Activated CD8-positive, alpha-beta T cell treated with anti-CD3 and anti-CD28 coated beads, Interleukin-2, amount 10 ng/mL, durations not matched to agents 7 days and 5 days (primary cell): ENCODE measurements at regions of chr1 and their contacts with region 1.

Region 1: GRCh38 chr1:160768295-160768657 is 27.7 kb upstream of the LY9 start:
- DNase-seq: peak; percentile 93
- ATAC-seq: peak; percentile 93
- H3K4me3 Mint-ChIP-seq: peak overlapping the region; percentile 82
- H3K27ac Mint-ChIP-seq: peak overlapping the region; percentile 95
- H3K4me1 Mint-ChIP-seq: peaks cover 46% of the 10 kb centered on the region
- H3K27me3 Mint-ChIP-seq: no peaks in the 10 kb centered on the region

Region 2: GRCh38 chr1:160618763-160619274 is 149.5 kb before region 1 on chr1:
- CTCF ChIA-PET with region 1: interaction called, 16 read pairs
- POLR2A ChIA-PET with region 1: interaction called, 3 read pairs
- DNase-seq: peak; percentile 61
- ATAC-seq: no peak
- H3K4me3 Mint-ChIP-seq: no peak overlapping the region
- H3K27ac Mint-ChIP-seq: peak overlapping the region; percentile 55
- H3K4me1 Mint-ChIP-seq: peaks cover 73% of the 10 kb centered on the region
- H3K27me3 Mint-ChIP-seq: no peaks in the 10 kb centered on the region

Region 3: GRCh38 chr1:160681067-160681890 is 87.0 kb before region 1 on chr1:
- CTCF ChIA-PET with region 1: interaction called, 91 read pairs
- POLR2A ChIA-PET with region 1: interaction called, 5 read pairs
- DNase-seq: peak; percentile 93
- ATAC-seq: peak; percentile 78
- H3K4me3 Mint-ChIP-seq: no peak overlapping the region
- H3K27ac Mint-ChIP-seq: peak overlapping the region; percentile 88
- H3K4me1 Mint-ChIP-seq: peaks cover 85% of the 10 kb centered on the region
- H3K27me3 Mint-ChIP-seq: no peaks in the 10 kb centered on the region

Region 4: GRCh38 chr1:160731990-160732389 is 36.3 kb before region 1 on chr1:
- CTCF ChIA-PET with region 1: interaction called, 439 read pairs
- POLR2A ChIA-PET with region 1: interaction called, 13 read pairs
- DNase-seq: no peak
- ATAC-seq: no peak
- H3K4me3 Mint-ChIP-seq: no peak overlapping the region
- H3K27ac Mint-ChIP-seq: no peak overlapping the region
- H3K4me1 Mint-ChIP-seq: peaks cover 39% of the 10 kb centered on the region
- H3K27me3 Mint-ChIP-seq: no peaks in the 10 kb centered on the region

Region 5: GRCh38 chr1:160748181-160748877 is 19.9 kb before region 1 on chr1:
- CTCF ChIA-PET with region 1: interaction called, 217 read pairs
- POLR2A ChIA-PET with region 1: interaction called, 16 read pairs
- DNase-seq: no peak
- ATAC-seq: no peak
- H3K4me3 Mint-ChIP-seq: no peak overlapping the region
- H3K27ac Mint-ChIP-seq: peak overlapping the region; percentile 40
- H3K4me1 Mint-ChIP-seq: peaks cover 96% of the 10 kb centered on the region
- H3K27me3 Mint-ChIP-seq: no peaks in the 10 kb centered on the region

Region 6: GRCh38 chr1:160795951-160796383 is 27.7 kb after region 1 on chr1 and contains the start of gene LY9:
- CTCF ChIA-PET with region 1: interaction called, 48 read pairs
- POLR2A ChIA-PET with region 1: interaction called, 9 read pairs
- DNase-seq: peak; percentile 89
- ATAC-seq: peak; percentile 85
- H3K4me3 Mint-ChIP-seq: peak within 1 kb of the TSS; percentile 88
- H3K27ac Mint-ChIP-seq: peak within 1 kb of the TSS; percentile 95
- H3K4me1 Mint-ChIP-seq: peaks cover 62% of the 10 kb centered on the region
- H3K27me3 Mint-ChIP-seq: no peaks in the 10 kb centered on the region
- total RNA-seq, gene LY9: 24.7 to 24.9 TPM

Region 7: DNA sequence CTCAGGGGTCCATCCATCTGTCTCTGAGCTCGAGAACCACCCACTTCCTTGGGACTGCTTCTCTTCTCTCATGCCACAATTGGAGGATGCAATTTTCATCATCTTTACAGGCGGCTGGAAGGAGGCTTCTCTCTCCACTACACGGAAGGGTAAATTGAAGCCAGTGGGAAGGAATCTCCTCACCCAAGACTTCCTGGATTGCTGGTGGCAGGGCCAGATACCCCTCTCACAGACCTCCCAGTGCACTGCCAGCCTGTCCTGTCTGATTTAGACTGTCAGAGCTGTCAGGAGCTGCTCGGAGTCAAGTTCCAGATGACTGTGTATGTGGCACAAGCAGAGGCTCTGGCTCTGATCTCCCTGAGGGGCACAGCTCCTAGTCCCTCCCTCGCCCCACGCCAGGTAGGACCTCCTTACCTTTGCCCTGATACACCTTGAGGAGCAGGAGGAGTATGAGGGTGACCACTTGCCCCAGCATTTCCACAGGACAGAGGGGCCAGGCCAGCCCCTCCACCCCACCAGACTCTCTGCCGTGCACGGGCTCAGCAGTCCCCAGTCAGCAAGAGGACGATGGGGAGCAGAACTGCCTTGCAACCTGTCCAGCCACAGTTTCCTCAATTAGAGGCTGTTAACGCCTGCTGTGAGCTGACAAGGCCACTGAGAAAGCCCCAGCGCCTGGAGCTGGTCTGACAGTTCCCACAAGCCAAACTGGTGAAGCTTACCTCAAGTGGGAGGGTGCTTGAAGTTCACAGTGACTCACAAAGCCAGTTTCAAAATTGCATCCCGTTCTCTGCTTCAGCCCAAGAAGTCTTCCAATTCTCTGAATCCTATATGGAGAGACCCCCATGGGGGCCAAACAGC is 94.2 kb after region 1 on chr1 and contains the start of gene CD244:
- CTCF ChIA-PET with region 1: no interaction called
- POLR2A ChIA-PET with region 1: no interaction called
- DNase-seq: peak; percentile 82
- ATAC-seq: peak; percentile 90
- H3K4me3 Mint-ChIP-seq: peak within 1 kb of the TSS; percentile 78
- H3K27ac Mint-ChIP-seq: peak within 1 kb of the TSS; percentile 90
- H3K4me1 Mint-ChIP-seq: peaks cover 56% of the 10 kb centered on the region
- H3K27me3 Mint-ChIP-seq: no peaks in the 10 kb centered on the region
- total RNA-seq, gene CD244: 15.0 to 15.5 TPM